ENCODE measurements at regions of chr5 and their contacts with region 1.

Region 1: GRCh38 chr5:176361437-176362232 is at the start of gene KIAA1191:
- DNase-seq: peak; percentile 85 to 94
- H3K4me3 ChIP-seq: peak within 1 kb of the TSS; percentile 99
- H3K27ac ChIP-seq: 0 out of 2 replicates have a peak within 1 kb of the TSS, but pooled peaks have one; percentile 15
- H3K4me1 ChIP-seq: peaks cover 6% of the 10 kb centered on the region; the same call in 1 of the 2 replicates
- H3K27me3 ChIP-seq: no peaks in the 10 kb centered on the region
- CTCF ChIP-seq: no peak
- total RNA-seq, gene KIAA1191: 115 and 122 TPM in 2 replicates

Region 2: GRCh38 chr5:176319827-176320554 is 41.6 kb before region 1 on chr5:
- CTCF ChIA-PET with region 1: no interaction called
- POLR2A ChIA-PET with region 1: no interaction called
- intact Hi-C with region 1: no loop called
- DNase-seq: no peak
- H3K4me3 ChIP-seq: no peak overlapping the region
- H3K27ac ChIP-seq: no peak overlapping the region
- H3K4me1 ChIP-seq: no peaks in the 10 kb centered on the region
- H3K27me3 ChIP-seq: no peaks in the 10 kb centered on the region
- CTCF ChIP-seq: 0 out of 2 replicates have a peak, but pooled peaks have one; percentile 36

Region 3: DNA sequence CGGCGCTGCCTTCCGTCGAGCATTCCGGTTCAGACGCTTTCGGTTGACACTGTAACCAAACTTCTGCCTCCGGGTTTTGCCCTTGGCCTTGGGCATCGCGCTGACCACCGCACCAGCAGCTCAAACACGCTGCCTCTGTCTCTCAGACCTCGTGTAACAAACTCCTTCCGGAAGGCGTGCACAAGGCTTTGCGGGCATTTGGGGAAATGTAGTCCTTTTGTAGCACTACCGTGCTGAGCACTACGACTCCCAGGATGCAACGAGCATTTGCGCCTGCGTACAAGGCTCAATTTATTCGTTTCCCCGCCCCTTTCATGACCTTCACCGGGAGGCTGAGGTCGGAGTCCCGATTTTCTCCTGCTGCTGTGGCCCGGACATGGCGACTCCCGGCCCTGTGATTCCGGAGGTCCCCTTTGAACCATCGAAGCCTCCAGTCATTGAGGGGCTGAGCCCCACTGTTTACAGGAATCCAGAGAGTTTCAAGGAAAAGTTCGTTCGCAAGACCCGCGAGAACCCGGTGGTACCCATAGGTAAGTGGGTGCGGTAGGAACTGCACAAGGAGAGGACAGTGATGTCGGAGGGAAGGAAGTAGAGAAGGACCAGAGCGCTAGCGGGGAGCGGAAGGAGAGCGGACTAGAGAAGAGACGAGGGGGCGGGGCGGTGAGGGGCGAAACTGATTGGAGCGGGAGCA is 27.0 kb after region 1 on chr5 and contains the starts of genes HIGD2A and NOP16:
- CTCF ChIA-PET with region 1: no interaction called
- POLR2A ChIA-PET with region 1: interaction called, 8 read pairs
- intact Hi-C with region 1: loop called (anchors 1 kb)
- DNase-seq: peak; percentile 95 to 98
- H3K4me3 ChIP-seq: peak within 1 kb of the TSS; percentile 74
- H3K27ac ChIP-seq: peak within 1 kb of the TSS; percentile 71
- H3K4me1 ChIP-seq: peaks cover 22% of the 10 kb centered on the region
- H3K27me3 ChIP-seq: no peaks in the 10 kb centered on the region
- CTCF ChIP-seq: no peak
- total RNA-seq, gene HIGD2A: 133 and 149 TPM in 2 replicates
- total RNA-seq, gene NOP16: 31.5 and 35.8 TPM in 2 replicates

Region 4: GRCh38 chr5:176463113-176463764 is 101.6 kb after region 1 on chr5:
- CTCF ChIA-PET with region 1: interaction called, 11 read pairs
- POLR2A ChIA-PET with region 1: interaction called, 13 read pairs
- intact Hi-C with region 1: no loop called
- DNase-seq: no peak
- H3K4me3 ChIP-seq: no peak overlapping the region
- H3K27ac ChIP-seq: no peak overlapping the region
- H3K4me1 ChIP-seq: peaks cover 13% of the 10 kb centered on the region
- H3K27me3 ChIP-seq: no peaks in the 10 kb centered on the region
- CTCF ChIP-seq: no peak

Region 5: GRCh38 chr5:176543428-176544173 is 182.0 kb after region 1 on chr5:
- CTCF ChIA-PET with region 1: interaction called, 10 read pairs
- POLR2A ChIA-PET with region 1: no interaction called
- intact Hi-C with region 1: no loop called
- DNase-seq: peak; percentile 74 to 76
- H3K4me3 ChIP-seq: peak overlapping the region; percentile 91
- H3K27ac ChIP-seq: peak overlapping the region; percentile 58
- H3K4me1 ChIP-seq: peaks cover 58% of the 10 kb centered on the region
- H3K27me3 ChIP-seq: no peaks in the 10 kb centered on the region
- CTCF ChIP-seq: 0 out of 2 replicates have a peak, but pooled peaks have one; percentile 14